Cardiac septum (tissue), 1 donor: ENCODE measurements at regions of chr6 and their contacts with region 1.

Region 1: GRCh38 chr6:68876792-68877493 is 241.9 kb downstream of the ADGRB3 start:
- DNase-seq: no peak

Region 2: GRCh38 chr6:68054756-68055155 is 822.2 kb before region 1 on chr6:
- intact Hi-C with region 1: no loop called
- DNase-seq: no peak

Region 3: DNA sequence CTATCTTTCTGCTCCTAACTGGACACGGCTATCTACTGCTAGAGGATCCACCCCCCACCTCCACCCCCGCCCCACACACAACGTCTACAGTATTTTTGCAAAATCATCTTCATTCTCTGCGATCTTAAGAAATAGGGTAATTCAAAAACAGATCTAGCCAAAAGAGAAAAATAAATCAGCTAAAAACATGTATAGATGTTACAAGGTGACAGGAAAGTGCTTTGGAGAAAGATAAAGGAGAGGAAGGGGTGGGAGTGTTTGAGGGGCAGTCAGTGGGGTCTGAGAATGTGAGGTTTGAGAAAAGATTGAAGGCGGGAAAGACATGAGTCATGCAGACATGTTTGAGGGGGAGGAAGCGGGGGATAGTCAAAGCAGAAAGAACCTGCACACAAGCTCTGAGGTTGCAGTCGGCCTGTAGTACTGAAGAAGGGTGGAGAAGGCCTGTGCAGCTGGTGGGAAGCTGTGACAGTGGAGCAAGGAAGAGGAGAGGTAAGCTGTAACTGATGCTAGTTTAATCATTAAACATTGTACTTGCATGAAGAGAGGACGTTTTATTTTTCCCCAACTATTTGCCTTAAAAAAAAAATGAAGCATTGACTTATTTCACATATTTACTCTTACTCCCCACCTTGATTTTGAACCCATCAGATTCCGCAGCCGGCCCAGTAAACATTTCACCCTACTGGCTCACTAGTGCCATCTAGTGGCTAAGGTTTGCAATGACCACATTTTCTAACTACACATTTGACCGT is 90.8 kb after region 1 on chr6:
- intact Hi-C with region 1: loop called (anchors 10 kb)
- DNase-seq: no peak

Region 4: GRCh38 chr6:69069881-69070280 is 192.9 kb after region 1 on chr6:
- intact Hi-C with region 1: no loop called
- DNase-seq: no peak

Region 5: DNA sequence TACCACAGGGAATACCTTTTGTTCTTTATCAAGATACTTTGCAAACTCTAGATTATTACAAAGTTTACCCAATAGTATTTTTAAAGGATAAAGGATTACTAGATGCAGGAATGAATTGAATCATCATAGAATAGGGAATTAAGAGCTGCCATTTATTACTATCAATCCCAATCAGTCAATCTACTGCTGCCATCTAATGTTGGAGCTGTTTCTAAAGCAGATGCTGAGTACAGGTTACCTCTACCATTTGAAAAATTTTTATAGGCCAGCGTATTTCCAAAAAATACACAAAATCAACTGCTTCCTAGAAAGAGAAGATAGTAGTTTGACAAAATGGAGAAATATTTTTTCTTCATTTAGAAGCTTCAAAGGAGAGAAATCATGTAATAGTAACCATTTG is 278.5 kb after region 1 on chr6:
- intact Hi-C with region 1: loop called (anchors 10 kb)
- DNase-seq: no peak